Activated T-helper 1 cell treated with anti-CD3 and anti-CD28 coated beads, Interleukin-12 subunit alpha, Interleukin-12 subunit beta, Interleukin-2, Interleukin-4 antibody, amounts not matched to agents 30 ng/mL and 10 ng/mL and 1 ng/mL, durations not matched to agents 14 hours and 24 hours and 36 hours (primary cell): ENCODE measurements at regions of chr14 and their contacts with region 1.

Region 1: DNA sequence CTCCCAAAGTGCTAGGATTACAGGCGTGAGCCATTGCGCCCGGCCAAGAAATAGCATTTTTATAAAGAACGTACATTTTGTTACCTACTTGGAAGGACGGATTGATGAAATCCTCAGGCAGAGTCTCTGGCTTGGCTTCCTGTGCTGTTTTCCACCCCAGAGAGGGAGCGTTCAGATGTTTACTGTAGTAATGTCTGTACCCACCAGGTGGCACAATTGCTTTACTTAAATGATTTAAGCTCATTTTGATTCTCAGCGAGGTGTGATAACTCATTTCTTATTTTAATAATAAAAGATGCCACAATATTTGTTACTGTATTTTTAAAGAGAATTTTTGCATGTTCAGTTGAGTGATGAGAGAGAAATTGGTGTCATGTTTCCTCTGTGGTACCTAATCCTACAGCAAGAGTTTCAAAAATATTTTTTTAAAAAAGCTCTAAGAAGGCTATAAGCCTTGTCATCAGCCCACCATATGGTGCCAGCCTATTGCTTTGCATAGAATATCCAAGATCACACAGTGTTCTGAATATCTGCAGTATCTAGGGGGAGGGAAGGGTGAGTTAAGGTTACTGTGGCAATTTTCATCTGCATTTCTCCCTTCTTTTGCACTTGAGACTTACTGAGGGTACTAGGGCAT is 82.6 kb upstream of the TRAF3 start:
- DNase-seq: peak; percentile 37
- H3K4me3 Mint-ChIP-seq: no peak overlapping the region
- H3K27ac Mint-ChIP-seq: no peak overlapping the region
- H3K4me1 Mint-ChIP-seq: peaks cover 19% of the 10 kb centered on the region
- H3K27me3 Mint-ChIP-seq: no peaks in the 10 kb centered on the region

Region 2: DNA sequence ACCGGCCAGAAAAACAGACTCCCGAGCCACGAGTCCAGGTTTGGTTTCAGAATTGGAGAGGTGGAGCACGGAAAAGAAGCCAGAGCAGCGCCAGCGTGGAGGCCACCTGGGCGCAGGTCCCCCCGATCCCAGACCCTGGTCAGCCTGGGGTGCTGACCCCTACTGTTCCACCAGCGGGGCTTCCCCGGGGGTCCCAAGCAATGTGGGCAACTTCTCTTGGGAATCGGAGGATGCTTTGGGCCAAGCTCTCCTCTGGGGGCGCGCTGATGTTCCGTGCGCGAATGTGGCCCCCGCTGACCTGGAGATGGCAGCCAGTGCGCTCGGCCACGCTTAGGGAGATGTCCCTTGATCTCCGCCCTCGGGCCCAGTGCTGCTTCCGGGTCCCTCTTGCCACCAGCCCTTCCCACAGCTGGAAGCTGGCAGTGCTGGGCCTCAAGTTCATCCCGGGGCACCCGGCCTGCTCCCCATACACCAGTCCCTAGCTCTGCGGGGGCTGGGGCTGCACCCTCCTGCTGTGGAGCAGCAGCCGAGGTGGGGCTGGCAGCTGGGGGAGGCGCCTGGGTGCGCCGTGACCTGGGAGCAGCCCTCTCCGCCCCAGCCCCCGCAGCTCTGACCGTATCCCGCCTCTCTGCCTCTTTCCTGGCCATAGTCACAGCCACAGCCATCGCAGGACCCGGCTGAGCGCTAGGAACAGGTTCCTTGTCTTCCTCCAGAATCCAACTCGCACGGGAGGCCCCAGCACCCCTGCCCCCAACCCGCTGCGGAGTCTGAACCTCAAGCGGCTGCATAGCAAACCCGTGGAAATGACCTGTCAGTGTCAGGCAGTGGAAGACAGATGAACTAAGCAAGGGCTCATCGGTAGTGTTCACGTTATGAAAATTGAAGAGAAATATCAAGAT is 11.0 kb before region 1 on chr14:
- intact Hi-C with region 1: no loop called
- DNase-seq: no peak
- H3K4me3 Mint-ChIP-seq: no peak overlapping the region
- H3K27ac Mint-ChIP-seq: no peak overlapping the region
- H3K4me1 Mint-ChIP-seq: peaks cover 11% of the 10 kb centered on the region
- H3K27me3 Mint-ChIP-seq: no peaks in the 10 kb centered on the region

Region 3: GRCh38 chr14:102917469-102918211 is 223.0 kb after region 1 on chr14:
- intact Hi-C with region 1: loop called (anchors 1 kb)
- DNase-seq: peak; percentile 29
- H3K4me3 Mint-ChIP-seq: no peak overlapping the region
- H3K27ac Mint-ChIP-seq: no peak overlapping the region
- H3K4me1 Mint-ChIP-seq: no peaks in the 10 kb centered on the region
- H3K27me3 Mint-ChIP-seq: no peaks in the 10 kb centered on the region

Region 4: GRCh38 chr14:103091041-103091882 is 396.6 kb after region 1 on chr14:
- intact Hi-C with region 1: loop called (anchors 1 kb)
- DNase-seq: peak; percentile 64
- H3K4me3 Mint-ChIP-seq: peak overlapping the region; percentile 19
- H3K27ac Mint-ChIP-seq: no peak overlapping the region
- H3K4me1 Mint-ChIP-seq: no peaks in the 10 kb centered on the region
- H3K27me3 Mint-ChIP-seq: no peaks in the 10 kb centered on the region